CD8-positive, alpha-beta T cell (primary cell): ENCODE measurements at regions of chr4 and their contacts with region 1.

Region 1: GRCh38 chr4:41957634-41958033 is 22.4 kb downstream of the TMEM33 start:
- DNase-seq: peak in 2 of 9 experiments; percentile 49 to 64
- ATAC-seq: peak; percentile 59
- H3K4me3 ChIP-seq: no peak overlapping the region
- H3K4me3 Mint-ChIP-seq: no peak overlapping the region
- H3K27ac ChIP-seq: no peak overlapping the region
- H3K27ac Mint-ChIP-seq: no peak overlapping the region
- H3K4me1 ChIP-seq: no peaks in the 10 kb centered on the region
- H3K4me1 Mint-ChIP-seq: no peaks in the 10 kb centered on the region
- H3K27me3 ChIP-seq: no peaks in the 10 kb centered on the region
- H3K27me3 Mint-ChIP-seq: no peaks in the 10 kb centered on the region
- CTCF ChIP-seq: peak; percentile 51

Region 2: DNA sequence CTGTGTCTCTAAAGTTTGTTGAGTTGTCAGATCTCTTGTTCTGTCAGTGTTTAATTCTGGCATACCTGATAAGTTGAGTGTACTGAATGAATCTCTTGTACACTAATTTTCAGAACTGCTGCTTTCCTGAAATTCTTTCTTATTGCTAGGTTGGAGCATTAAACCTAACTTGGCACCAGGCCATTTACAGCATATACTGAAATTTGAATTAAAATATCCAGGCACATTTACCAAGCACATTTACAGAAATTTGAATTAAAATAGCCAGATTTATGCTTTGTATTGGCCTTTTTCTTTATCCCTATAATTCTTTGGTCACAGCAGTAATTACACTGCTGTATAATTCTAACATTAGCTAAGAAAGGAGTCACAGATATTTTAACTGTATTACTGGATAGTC is 13.5 kb before region 1 on chr4:
- CTCF ChIA-PET with region 1: interaction called, 3 read pairs
- POLR2A ChIA-PET with region 1: no interaction called
- intact Hi-C with region 1: loop called in 1 of 2 experiments (anchors 1 kb)
- DNase-seq: no peak
- ATAC-seq: no peak
- H3K4me3 ChIP-seq: no peak overlapping the region
- H3K4me3 Mint-ChIP-seq: no peak overlapping the region
- H3K27ac ChIP-seq: no peak overlapping the region
- H3K27ac Mint-ChIP-seq: no peak overlapping the region
- H3K4me1 ChIP-seq: no peaks in the 10 kb centered on the region
- H3K4me1 Mint-ChIP-seq: peaks cover 28% of the 10 kb centered on the region
- H3K27me3 ChIP-seq: no peaks in the 10 kb centered on the region
- H3K27me3 Mint-ChIP-seq: no peaks in the 10 kb centered on the region
- CTCF ChIP-seq: no peak

Region 3: DNA sequence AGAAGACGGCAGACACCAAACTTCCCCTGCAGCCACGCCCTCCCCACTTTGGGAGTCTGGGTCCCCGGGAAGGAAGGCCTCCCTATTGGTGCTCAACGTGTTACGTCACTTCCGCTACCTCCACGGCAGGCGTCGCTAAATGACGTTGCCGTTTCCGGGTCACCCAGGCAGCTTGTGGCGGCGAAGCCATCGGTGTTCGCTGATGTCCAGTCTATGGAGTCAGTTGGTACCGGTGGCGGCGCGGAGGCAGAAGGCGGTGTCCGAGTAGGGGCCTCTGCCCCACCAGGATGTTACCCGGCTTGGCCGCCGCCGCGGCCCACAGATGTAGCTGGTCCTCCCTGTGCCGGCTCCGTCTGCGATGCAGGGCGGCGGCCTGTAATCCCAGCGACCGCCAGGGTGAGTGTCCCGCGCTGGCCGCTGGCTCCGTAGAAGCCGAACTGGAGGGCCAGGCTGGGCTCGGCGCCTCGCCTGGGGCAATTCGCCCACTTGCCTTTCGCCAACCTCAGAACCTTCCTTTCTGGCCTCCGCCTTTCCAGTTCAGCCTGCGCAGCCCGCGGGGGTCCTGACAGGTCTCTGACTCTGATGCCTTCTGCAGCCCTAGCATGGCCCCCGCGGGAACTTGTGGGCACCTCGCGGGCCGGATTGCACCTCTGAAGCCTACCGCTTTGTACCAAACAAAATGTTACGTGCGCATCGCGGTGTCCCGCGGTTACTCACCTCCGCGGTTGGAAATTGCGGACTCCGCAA is 32.9 kb after region 1 on chr4 and contains the start of gene SLC30A9:
- CTCF ChIA-PET with region 1: no interaction called
- POLR2A ChIA-PET with region 1: no interaction called
- intact Hi-C with region 1: loop called in 1 of 2 experiments (anchors 5 kb)
- DNase-seq: peak; percentile 84 to 98 (median 92)
- ATAC-seq: peak; percentile 94
- H3K4me3 ChIP-seq: peak within 1 kb of the TSS; percentile 77 to 78
- H3K4me3 Mint-ChIP-seq: peak within 1 kb of the TSS; percentile 95
- H3K27ac ChIP-seq: peak within 1 kb of the TSS; percentile 83 to 91
- H3K27ac Mint-ChIP-seq: peak within 1 kb of the TSS; percentile 98
- H3K4me1 ChIP-seq: peaks cover 20% of the 10 kb centered on the region
- H3K4me1 Mint-ChIP-seq: peaks cover 39% of the 10 kb centered on the region
- H3K27me3 ChIP-seq: no peaks in the 10 kb centered on the region
- H3K27me3 Mint-ChIP-seq: no peaks in the 10 kb centered on the region
- CTCF ChIP-seq: no peak
- total RNA-seq, gene SLC30A9: 16.3 to 18.7 TPM

Region 4: GRCh38 chr4:42519803-42520417 is 562.3 kb after region 1 on chr4:
- CTCF ChIA-PET with region 1: no interaction called
- POLR2A ChIA-PET with region 1: no interaction called
- intact Hi-C with region 1: loop called (anchors 2 to 5 kb)
- DNase-seq: peak in 6 of 9 experiments; percentile 5 to 63 (median 46)
- ATAC-seq: peak; percentile 73
- H3K4me3 ChIP-seq: no peak overlapping the region
- H3K4me3 Mint-ChIP-seq: no peak overlapping the region
- H3K27ac ChIP-seq: no peak overlapping the region
- H3K27ac Mint-ChIP-seq: no peak overlapping the region
- H3K4me1 ChIP-seq: no peaks in the 10 kb centered on the region
- H3K4me1 Mint-ChIP-seq: peaks cover 3% of the 10 kb centered on the region
- H3K27me3 ChIP-seq: no peaks in the 10 kb centered on the region
- H3K27me3 Mint-ChIP-seq: no peaks in the 10 kb centered on the region
- CTCF ChIP-seq: peak; percentile 82